ENCODE measurements at regions of chr12 and their contacts with region 1.

Region 1: DNA sequence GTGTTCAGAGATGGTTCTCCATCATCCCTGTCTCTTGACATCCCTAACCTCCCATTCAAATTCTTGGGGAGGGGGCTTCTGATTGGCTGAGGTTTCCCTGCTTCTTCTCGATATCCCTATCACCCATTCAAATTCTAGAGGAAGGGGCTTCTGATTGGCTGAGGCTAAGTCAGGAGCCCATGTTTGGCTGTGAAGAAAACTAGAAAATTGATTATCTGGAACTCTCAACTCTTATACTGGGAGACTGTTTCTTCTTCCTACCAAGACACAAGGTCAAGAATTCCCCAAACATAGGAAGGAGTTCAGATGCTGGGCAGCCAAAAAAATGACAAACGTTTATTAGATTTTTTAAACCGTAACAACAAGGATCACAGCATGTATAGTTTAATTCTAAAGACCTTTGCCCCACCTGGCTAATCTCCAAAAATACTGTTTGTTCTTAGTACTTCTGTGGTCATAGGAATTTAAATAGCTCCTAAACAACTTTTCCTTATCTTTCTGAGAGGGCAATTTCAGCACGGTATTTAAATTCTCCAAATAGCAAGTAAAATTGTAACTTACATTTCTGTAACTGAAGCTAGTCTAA is 26.4 kb downstream of the SPIC start:
- DNase-seq: no peak
- H3K4me3 ChIP-seq: no peak overlapping the region
- H3K27ac ChIP-seq: no peak overlapping the region
- H3K4me1 ChIP-seq: peaks cover 0 to 5% of the 10 kb centered on the region in 2 donors
- H3K27me3 ChIP-seq: no peaks in the 10 kb centered on the region
- CTCF ChIP-seq: no peak
- POLR2A ChIP-seq: no peak

Region 2: DNA sequence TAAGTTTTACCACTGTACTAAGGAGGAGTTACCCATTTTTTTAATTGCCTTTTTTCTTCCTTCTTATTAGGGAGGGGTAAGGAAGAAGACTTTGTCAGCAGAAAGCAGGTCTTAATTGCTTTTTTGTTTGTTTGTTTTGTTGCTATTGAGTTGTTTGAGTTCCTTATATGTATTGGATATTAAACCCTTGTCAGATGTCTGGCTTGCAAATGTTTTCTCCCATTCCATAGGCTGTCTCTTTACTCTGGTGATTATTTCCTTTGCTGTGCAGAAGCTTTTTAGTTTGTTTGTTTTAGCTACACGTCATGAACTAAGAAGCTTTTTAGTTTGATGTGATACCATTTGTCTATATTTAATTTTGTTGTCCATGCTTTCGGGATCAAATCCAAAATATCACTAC is 13.0 kb before region 1 on chr12:
- intact Hi-C with region 1: loop called (anchors 1 kb)
- DNase-seq: no peak
- H3K4me3 ChIP-seq: no peak overlapping the region
- H3K27ac ChIP-seq: no peak overlapping the region
- H3K4me1 ChIP-seq: no peaks in the 10 kb centered on the region
- H3K27me3 ChIP-seq: no peaks in the 10 kb centered on the region
- CTCF ChIP-seq: no peak
- POLR2A ChIP-seq: no peak

Measured in breast epithelium (tissue), 4 donors.